ENCODE measurements at regions of chr5 and their contacts with region 1.

Region 1: GRCh38 chr5:149852641-149853330 is 91.8 kb downstream of the PDE6A start:
- DNase-seq: peak; percentile 67
- ATAC-seq: peak; percentile 58
- H3K4me3 Mint-ChIP-seq: no peak overlapping the region
- H3K27ac Mint-ChIP-seq: no peak overlapping the region
- H3K4me1 Mint-ChIP-seq: no peaks in the 10 kb centered on the region
- H3K27me3 Mint-ChIP-seq: no peaks in the 10 kb centered on the region
- CTCF ChIP-seq: peak; percentile 85

Region 2: DNA sequence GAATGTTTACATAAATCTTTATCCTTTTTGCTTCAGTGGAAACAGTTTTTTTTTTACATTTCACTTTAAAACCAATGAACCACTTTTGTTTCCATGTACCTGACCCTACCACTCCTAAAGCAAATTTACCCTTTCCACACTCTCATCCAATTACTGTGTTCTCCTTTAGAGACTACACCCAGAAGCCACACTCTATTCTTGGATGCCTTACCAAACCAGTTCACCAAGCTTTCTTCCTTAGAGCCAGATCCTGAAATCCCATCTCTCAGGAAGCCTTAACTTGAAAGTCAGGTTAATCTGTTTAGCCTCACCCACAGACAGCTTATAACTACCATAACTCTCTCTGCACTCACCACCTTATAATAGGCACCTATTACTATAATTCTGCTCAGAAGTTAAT is 305.9 kb before region 1 on chr5:
- CTCF ChIA-PET with region 1: no interaction called
- POLR2A ChIA-PET with region 1: no interaction called
- intact Hi-C with region 1: no loop called
- DNase-seq: no peak
- ATAC-seq: no peak
- H3K4me3 Mint-ChIP-seq: peak overlapping the region; percentile 96
- H3K27ac Mint-ChIP-seq: peak overlapping the region; percentile 81
- H3K4me1 Mint-ChIP-seq: peaks cover 49% of the 10 kb centered on the region
- H3K27me3 Mint-ChIP-seq: no peaks in the 10 kb centered on the region
- CTCF ChIP-seq: no peak

Region 3: GRCh38 chr5:149828161-149828884 is 24.5 kb before region 1 on chr5:
- CTCF ChIA-PET with region 1: interaction called, 152 read pairs
- POLR2A ChIA-PET with region 1: interaction called, 3 read pairs
- intact Hi-C with region 1: no loop called
- DNase-seq: peak; percentile 93
- ATAC-seq: peak; percentile 65
- H3K4me3 Mint-ChIP-seq: no peak overlapping the region
- H3K27ac Mint-ChIP-seq: peak overlapping the region; percentile 52
- H3K4me1 Mint-ChIP-seq: peaks cover 11% of the 10 kb centered on the region
- H3K27me3 Mint-ChIP-seq: no peaks in the 10 kb centered on the region
- CTCF ChIP-seq: peak; percentile 88

Region 4: GRCh38 chr5:149869411-149869821 is 16.6 kb after region 1 on chr5:
- CTCF ChIA-PET with region 1: interaction called, 29 read pairs
- POLR2A ChIA-PET with region 1: interaction called, 3 read pairs
- intact Hi-C with region 1: no loop called
- DNase-seq: no peak
- ATAC-seq: no peak
- H3K4me3 Mint-ChIP-seq: no peak overlapping the region
- H3K27ac Mint-ChIP-seq: no peak overlapping the region
- H3K4me1 Mint-ChIP-seq: no peaks in the 10 kb centered on the region
- H3K27me3 Mint-ChIP-seq: no peaks in the 10 kb centered on the region
- CTCF ChIP-seq: no peak

Region 5: DNA sequence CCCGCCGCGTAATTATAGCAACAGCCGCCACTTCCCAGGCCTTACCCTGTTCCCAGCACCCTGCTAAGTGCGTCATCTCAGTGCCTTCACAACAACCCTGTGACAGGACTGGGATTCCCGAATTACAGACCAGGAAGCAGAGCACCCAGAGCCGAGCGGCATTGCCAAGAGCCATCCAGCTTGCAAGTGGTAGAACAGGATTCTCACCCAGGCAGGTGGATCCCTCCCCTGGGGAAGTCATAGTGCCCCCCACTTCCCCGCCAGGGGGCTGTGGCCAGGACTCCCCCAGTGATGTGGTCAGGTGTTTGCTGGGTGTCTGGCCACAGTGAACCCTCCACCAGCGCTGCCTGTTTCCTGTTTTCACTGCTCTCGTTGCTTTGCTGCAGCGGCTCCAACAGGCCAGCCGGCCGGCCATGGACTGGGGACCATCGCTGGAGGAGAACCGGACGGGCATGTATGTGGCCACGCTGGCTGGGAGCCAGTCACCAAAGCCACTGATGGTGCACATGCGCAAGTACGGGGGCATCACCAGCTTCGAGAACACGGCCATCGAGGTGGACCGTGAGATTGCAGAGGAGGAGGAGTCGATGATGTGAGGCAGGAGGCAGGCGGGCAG is 356.3 kb after region 1 on chr5:
- CTCF ChIA-PET with region 1: no interaction called
- POLR2A ChIA-PET with region 1: no interaction called
- intact Hi-C with region 1: no loop called
- DNase-seq: peak; percentile 58
- ATAC-seq: peak; percentile 74
- H3K4me3 Mint-ChIP-seq: no peak overlapping the region
- H3K27ac Mint-ChIP-seq: no peak overlapping the region
- H3K4me1 Mint-ChIP-seq: peaks cover 20% of the 10 kb centered on the region
- H3K27me3 Mint-ChIP-seq: peaks cover 3% of the 10 kb centered on the region
- CTCF ChIP-seq: no peak

Measured in activated CD8-positive, alpha-beta T cell treated with anti-CD3 and anti-CD28 coated beads for 36 hours (primary cell).